OCI-LY7 (cell line): ENCODE measurements at regions of chr15 and their contacts with region 1.

Region 1: DNA sequence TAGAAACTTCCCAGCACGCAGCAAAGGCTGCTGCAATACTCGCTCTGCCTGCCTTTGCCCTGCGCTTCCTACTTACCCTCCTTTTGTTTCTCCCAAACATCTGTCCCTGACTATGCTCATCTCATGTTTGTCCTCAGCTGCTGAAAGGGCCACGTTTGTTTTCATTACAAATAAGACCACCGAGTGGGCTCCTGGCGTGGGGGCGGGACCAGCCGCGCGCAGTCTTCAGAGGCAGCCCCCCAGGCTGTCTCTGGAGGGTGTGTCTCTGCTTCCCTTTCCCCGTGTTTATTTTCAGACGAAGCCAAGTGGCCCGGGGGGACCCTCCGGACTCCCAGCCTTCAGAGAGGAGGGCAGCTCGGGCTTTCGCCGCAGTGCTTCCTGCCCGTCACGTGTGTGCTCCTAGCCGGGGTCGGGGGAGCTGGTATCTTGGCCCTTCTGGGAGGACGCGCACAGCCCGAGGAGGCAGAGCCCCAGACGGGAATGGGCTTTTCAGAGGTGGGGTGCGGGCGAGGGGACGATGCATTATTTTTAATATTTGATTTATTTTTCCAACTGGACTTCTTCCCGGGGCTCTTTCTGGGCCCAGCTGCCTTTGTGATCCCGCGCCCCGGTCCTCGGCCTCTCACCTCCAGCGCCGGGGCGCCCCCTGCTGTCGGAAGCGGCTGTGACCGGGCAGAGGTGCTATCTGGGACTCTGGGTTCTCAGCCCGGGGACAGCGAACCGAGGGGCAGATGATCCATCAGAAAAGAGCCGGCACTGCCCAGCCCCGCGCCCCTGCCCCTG is 70.0 kb upstream of the CGNL1 start:
- DNase-seq: peak; percentile 81
- H3K4me3 ChIP-seq: peak overlapping the region; percentile 63
- H3K27ac ChIP-seq: no peak overlapping the region
- H3K4me1 ChIP-seq: peaks cover 9% of the 10 kb centered on the region
- CTCF ChIP-seq: peak; percentile 94

Region 2: DNA sequence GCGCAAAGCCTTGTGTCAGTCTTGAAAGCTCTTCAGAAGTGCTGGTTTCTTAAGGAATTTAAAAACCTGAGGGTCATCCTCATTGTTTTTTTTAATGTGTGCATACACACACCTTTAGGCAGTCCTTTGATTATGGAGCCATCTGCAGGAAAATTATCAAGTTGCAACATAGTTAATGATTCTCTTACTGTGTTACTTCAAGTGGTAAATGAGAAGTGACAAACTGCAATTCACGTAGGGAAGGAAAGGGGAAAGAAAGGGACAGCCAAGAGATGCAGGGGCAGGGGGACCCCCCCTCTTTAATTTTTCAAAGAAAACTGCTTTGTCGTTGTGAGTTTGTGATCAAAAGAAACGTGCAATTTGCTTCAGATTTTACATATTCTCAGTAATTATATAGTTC is 92.5 kb before region 1 on chr15:
- CTCF ChIA-PET with region 1: no interaction called
- POLR2A ChIA-PET with region 1: no interaction called
- intact Hi-C with region 1: loop called (anchors 5 kb)
- DNase-seq: peak; percentile 48
- H3K4me3 ChIP-seq: no peak overlapping the region
- H3K27ac ChIP-seq: no peak overlapping the region
- H3K4me1 ChIP-seq: peaks cover 7% of the 10 kb centered on the region
- CTCF ChIP-seq: peak; percentile 77

Region 3: DNA sequence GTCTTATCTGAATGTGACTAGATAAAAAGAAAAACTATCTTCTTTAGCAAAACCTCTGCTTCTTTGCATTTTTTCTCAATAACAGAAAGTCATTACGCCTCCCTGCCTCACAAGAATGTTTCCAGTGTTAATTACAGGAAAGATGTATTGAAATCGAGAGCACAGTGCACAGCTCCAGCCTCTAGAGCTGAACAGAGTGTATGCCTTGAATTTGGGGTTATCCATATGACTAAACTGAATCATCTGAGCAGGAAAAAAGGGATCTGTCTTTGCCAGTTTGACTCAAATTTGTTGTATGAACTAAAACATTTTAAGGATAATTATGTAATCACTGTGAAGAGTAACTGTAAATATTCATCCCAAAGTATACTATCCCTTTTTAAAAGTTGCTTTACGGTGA is 79.2 kb before region 1 on chr15:
- CTCF ChIA-PET with region 1: no interaction called
- POLR2A ChIA-PET with region 1: no interaction called
- intact Hi-C with region 1: no loop called
- DNase-seq: no peak
- H3K4me3 ChIP-seq: no peak overlapping the region
- H3K27ac ChIP-seq: no peak overlapping the region
- H3K4me1 ChIP-seq: no peaks in the 10 kb centered on the region
- CTCF ChIP-seq: no peak

Region 4: DNA sequence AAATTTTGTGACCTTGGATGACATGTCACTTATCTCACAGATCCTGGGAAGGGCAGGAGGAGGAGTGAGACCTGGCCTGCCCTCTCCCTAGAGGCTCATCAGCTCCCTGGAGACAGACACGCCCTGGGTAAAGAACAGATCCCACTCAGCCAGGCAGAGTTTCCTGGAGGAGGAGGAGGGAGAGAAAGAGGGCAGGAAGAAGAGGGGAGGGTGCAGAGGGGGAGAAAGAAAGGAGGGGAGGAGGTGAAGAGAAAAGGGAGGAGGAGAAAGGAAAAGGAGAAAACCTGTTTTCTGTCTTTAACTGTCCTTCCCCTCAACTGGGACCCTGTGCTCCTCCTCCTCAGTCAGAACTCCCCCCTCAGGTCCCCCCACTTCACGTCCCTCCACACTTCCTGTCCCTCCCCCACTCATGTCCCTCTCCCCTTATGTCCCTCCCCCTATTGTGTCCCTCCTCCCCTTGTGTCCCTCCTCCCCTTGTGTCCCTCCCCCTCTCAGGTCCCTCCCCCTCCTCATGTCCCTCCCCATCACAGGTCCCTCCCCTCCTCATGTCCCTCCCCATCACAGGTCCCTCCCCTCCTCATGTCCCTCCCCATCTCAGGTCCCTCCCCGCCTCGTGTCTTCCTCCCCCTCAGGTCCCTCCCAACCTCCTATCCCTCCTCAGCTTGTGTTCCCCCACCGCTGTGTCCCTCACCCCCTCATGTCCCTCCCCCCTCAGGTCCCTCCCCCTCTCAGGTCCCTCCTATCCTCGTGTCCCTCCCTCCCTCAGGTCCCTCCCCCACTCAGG is 17.6 kb after region 1 on chr15:
- CTCF ChIA-PET with region 1: no interaction called
- POLR2A ChIA-PET with region 1: no interaction called
- intact Hi-C with region 1: no loop called
- DNase-seq: peak; percentile 66
- H3K4me3 ChIP-seq: no peak overlapping the region
- H3K27ac ChIP-seq: no peak overlapping the region
- H3K4me1 ChIP-seq: peaks cover 28% of the 10 kb centered on the region
- CTCF ChIP-seq: no peak

Region 5: GRCh38 chr15:57462381-57462780 is 156.0 kb after region 1 on chr15:
- CTCF ChIA-PET with region 1: no interaction called
- POLR2A ChIA-PET with region 1: no interaction called
- intact Hi-C with region 1: no loop called
- DNase-seq: no peak
- H3K4me3 ChIP-seq: no peak overlapping the region
- H3K27ac ChIP-seq: no peak overlapping the region
- H3K4me1 ChIP-seq: no peaks in the 10 kb centered on the region
- CTCF ChIP-seq: peak; percentile 46